ENCODE measurements at regions of chr12 and their contacts with region 1.

Region 1: DNA sequence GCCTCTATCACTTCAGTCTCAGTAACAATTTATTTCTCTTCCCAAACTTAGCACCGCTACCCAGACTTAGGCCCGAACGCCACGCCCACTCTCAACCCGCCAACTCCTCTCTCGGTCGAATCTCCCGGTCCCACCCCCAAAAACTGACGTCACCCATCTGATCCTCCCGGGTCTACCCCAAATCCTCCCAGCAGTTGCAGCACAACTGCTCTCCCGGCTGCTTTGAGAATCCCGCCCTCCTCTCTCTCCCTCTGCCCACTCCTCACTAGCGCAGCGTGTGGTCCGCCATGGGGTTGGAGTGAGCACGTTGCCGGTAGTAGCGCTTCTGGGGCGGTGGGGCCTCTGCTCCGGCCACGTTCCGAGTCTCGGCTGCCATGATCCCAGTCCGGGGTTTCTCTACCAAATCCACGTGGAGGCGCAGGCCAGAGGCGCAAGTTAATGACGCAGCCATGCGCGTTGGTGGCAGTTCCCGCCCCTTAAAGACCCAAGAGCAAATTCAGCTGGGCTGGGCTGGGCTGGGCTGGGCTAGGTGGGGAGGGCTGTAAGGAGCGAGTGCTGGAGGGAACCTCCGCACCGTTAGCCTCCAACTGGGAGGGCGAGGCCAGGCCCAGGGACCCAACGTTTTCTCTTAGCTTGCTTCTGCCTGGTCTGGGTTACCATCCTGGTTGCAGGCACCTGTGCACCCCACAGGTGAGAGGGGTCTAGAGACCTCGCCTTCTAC is at the start of gene METTL1:
- DNase-seq: peak; percentile 97
- ATAC-seq: peak; percentile 89
- H3K4me3 Mint-ChIP-seq: peak within 1 kb of the TSS; percentile 97
- H3K27ac Mint-ChIP-seq: peak within 1 kb of the TSS; percentile 100
- H3K4me1 Mint-ChIP-seq: peaks cover 11% of the 10 kb centered on the region
- H3K27me3 Mint-ChIP-seq: peaks cover 31% of the 10 kb centered on the region
- CTCF ChIP-seq: no peak
- total RNA-seq, gene METTL1: 25.5 to 31.7 TPM (median 28.6 TPM) in 3 replicates

Region 2: GRCh38 chr12:57782608-57783465 is 11.0 kb after region 1 on chr12 and contains the start of gene TSFM:
- CTCF ChIA-PET with region 1: interaction called, 15 read pairs
- POLR2A ChIA-PET with region 1: interaction called, 5 read pairs
- DNase-seq: peak; percentile 96
- ATAC-seq: peak; percentile 91
- H3K4me3 Mint-ChIP-seq: peak within 1 kb of the TSS; percentile 100
- H3K27ac Mint-ChIP-seq: peak within 1 kb of the TSS; percentile 97
- H3K4me1 Mint-ChIP-seq: peaks cover 4% of the 10 kb centered on the region; the same call in 1 of the 2 replicates
- H3K27me3 Mint-ChIP-seq: no peaks in the 10 kb centered on the region
- CTCF ChIP-seq: peak; percentile 77
- total RNA-seq, gene TSFM: 48.6 to 49.5 TPM (median 48.7 TPM) in 3 replicates

Region 3: GRCh38 chr12:57874166-57875108 is 102.6 kb after region 1 on chr12:
- CTCF ChIA-PET with region 1: no interaction called
- POLR2A ChIA-PET with region 1: no interaction called
- DNase-seq: no peak
- ATAC-seq: no peak
- H3K4me3 Mint-ChIP-seq: no peak overlapping the region
- H3K27ac Mint-ChIP-seq: no peak overlapping the region
- H3K4me1 Mint-ChIP-seq: peaks cover 7% of the 10 kb centered on the region
- H3K27me3 Mint-ChIP-seq: no peaks in the 10 kb centered on the region; the same call in 1 of the 2 replicates
- CTCF ChIP-seq: no peak